IMR-90 (cell line): ENCODE measurements at regions of chr6 and their contacts with region 1.

Region 1: GRCh38 chr6:30590994-30591393 is 19.8 kb downstream of the ABCF1 start:
- DNase-seq: peak; percentile 72
- ATAC-seq: peak; percentile 91
- H3K4me3 ChIP-seq: no peak overlapping the region
- H3K27ac ChIP-seq: peak overlapping the region; percentile 85; the same call in 1 of the 2 replicates
- H3K4me1 ChIP-seq: peaks cover 7% of the 10 kb centered on the region
- H3K27me3 ChIP-seq: no peaks in the 10 kb centered on the region
- CTCF ChIP-seq: no peak
- POLR2A ChIP-seq: no peak
- RAD21 ChIP-seq: no peak

Region 2: DNA sequence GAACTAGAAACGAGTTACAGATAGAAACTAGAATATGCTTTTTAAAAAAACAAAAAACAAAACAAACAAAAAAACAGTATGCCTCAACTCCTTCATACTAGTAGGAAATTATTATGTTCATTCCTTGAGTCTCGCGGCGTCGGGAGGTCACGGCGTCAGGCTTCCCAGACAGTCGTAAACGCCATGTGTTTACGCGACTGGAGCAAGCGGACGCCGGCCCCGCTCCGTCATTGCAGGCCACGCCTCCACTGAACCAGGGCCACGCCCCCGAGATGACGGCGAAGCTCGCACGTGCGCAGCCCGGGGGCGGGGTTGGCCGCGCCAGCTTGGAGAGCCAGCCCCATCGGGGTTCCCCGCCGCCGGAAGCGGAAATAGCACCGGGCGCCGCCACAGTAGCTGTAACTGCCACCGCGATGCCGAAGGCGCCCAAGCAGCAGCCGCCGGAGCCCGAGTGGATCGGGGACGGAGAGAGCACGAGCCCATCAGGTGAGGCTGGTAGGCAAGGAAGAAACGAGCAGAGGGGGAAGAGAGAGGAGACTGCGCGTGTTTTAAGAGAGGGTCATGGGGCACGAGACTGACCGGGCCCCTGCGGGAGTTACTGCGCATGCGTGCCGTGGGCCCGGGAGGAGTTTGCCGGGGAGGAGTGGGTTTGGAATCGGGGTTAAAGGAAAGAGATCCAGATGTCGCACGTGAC is 19.8 kb before region 1 on chr6 and contains the start of gene ABCF1:
- CTCF ChIA-PET with region 1: interaction called, 3 read pairs
- POLR2A ChIA-PET with region 1: interaction called, 31 read pairs
- dilution Hi-C with region 1: no loop called
- in situ Hi-C with region 1: no loop called
- intact Hi-C with region 1: no loop called
- DNase-seq: peak; percentile 96
- ATAC-seq: peak; percentile 98
- H3K4me3 ChIP-seq: peak within 1 kb of the TSS; percentile 74
- H3K27ac ChIP-seq: peak within 1 kb of the TSS; percentile 95
- H3K4me1 ChIP-seq: peaks cover 3% of the 10 kb centered on the region
- H3K27me3 ChIP-seq: no peaks in the 10 kb centered on the region
- CTCF ChIP-seq: no peak
- POLR2A ChIP-seq: peak; percentile 93
- RAD21 ChIP-seq: no peak
- total RNA-seq, gene ABCF1: 47.5 and 48.6 TPM in 2 replicates

Region 3: GRCh38 chr6:30981942-30982772 is 391.2 kb after region 1 on chr6:
- CTCF ChIA-PET with region 1: interaction called, 12 read pairs
- POLR2A ChIA-PET with region 1: no interaction called
- dilution Hi-C with region 1: no loop called
- in situ Hi-C with region 1: no loop called
- intact Hi-C with region 1: no loop called
- DNase-seq: peak; percentile 81
- ATAC-seq: peak; percentile 97
- H3K4me3 ChIP-seq: peak overlapping the region; percentile 17; the same call in 1 of the 2 replicates
- H3K27ac ChIP-seq: no peak overlapping the region
- H3K4me1 ChIP-seq: peaks cover 6% of the 10 kb centered on the region; the same call in 1 of the 2 replicates
- H3K27me3 ChIP-seq: peaks cover 21% of the 10 kb centered on the region
- CTCF ChIP-seq: peak; percentile 12; the same call in 1 of the 2 replicates
- POLR2A ChIP-seq: no peak
- RAD21 ChIP-seq: peak; percentile 24